BJ (cell line): ENCODE measurements at regions of chr3 and their contacts with region 1.

Region 1: GRCh38 chr3:149771652-149772271 is 19.5 kb upstream of the COMMD2 start:
- DNase-seq: no peak
- H3K4me3 ChIP-seq: no peak overlapping the region
- H3K27me3 ChIP-seq: no peaks in the 10 kb centered on the region
- CTCF ChIP-seq: peak; percentile 81

Region 2: DNA sequence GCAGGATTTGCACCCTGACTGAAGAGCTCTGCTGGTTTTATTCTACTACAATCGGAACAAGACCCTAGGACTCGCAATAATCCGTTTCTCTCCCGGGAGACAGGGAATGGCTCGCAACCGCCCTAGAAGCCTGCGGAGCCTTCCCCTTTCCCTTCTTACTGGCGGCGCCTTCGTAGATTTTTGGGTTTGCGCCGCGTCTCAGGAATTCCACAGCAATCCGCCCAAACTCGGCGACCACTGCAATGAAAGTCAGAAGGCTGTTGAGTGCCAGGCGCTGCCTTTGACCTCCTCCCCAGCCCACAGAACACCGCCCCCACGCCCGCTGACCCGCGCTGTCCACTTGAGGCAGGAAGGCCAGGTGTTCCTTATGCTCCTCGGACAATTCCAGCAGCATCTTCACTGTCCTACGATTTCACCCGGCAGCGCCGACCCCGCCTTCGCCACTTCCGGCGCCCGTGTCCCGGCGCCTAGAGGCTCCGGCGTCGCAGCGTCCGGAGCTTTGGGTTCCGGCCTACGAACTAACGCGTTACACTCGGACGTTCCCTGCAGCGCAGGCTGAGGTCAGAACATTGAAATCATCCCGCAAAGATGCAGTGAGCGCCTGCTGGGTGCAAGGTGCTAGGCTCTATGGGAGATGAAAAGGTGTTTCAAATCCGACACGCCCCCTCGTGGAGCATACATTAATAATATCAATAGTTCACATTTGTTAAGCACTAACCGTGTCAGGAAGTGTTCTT is 19.5 kb before region 1 on chr3 and contains the start of gene COMMD2:
- CTCF ChIA-PET with region 1: interaction called, 14 read pairs
- POLR2A ChIA-PET with region 1: no interaction called
- DNase-seq: peak; percentile 24
- H3K4me3 ChIP-seq: peak within 1 kb of the TSS; percentile 80
- H3K27me3 ChIP-seq: no peaks in the 10 kb centered on the region
- CTCF ChIP-seq: peak; percentile 13; the same call in 1 of the 2 replicates
- polyA plus RNA-seq, gene COMMD2: 31.2 and 39.8 TPM in 2 replicates

Region 3: DNA sequence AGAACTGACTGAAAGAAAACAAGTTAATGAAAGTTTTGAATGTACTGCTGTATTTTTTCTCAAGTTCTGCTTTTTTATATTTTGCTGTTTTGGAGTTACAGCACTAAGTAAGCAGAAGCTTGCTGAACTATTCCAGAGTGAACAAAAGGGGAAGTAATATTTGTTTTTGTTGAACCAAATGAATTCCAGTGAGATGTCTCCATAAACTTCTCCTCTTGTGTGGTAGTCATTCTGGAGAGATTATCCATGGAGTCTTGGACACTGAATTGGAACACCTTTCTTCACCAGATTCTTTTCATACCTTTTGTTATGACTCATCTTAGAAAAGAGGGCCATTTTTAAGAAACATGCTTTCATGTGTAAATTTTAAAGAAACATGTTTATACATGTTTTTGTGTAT is 11.8 kb after region 1 on chr3:
- CTCF ChIA-PET with region 1: interaction called, 49 read pairs
- POLR2A ChIA-PET with region 1: no interaction called
- DNase-seq: no peak
- H3K4me3 ChIP-seq: no peak overlapping the region
- H3K27me3 ChIP-seq: no peaks in the 10 kb centered on the region
- CTCF ChIP-seq: no peak

Region 4: DNA sequence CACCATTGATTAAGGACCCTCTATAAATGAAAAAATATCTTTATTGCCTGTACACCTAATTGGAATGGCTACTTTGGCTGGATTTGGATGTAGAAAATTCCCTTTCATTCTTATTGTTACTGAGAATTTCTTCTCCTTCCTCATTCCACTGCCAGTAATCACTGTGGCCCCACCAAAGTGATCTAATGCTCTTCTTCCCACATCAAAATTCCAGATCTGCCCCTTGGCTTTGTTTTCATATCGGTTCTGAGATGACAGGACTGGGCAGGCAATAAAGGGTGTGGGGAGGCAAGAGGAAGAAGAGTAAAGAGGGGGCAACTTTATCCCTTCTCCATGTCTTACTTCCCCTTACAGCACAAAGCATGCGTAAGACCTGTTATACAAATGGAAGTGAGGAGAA is 18.5 kb after region 1 on chr3:
- CTCF ChIA-PET with region 1: interaction called, 18 read pairs
- POLR2A ChIA-PET with region 1: no interaction called
- DNase-seq: no peak
- H3K4me3 ChIP-seq: no peak overlapping the region
- H3K27me3 ChIP-seq: no peaks in the 10 kb centered on the region
- CTCF ChIP-seq: no peak